MCF 10A (cell line): ENCODE measurements at regions of chr5 and their contacts with region 1.

Region 1: DNA sequence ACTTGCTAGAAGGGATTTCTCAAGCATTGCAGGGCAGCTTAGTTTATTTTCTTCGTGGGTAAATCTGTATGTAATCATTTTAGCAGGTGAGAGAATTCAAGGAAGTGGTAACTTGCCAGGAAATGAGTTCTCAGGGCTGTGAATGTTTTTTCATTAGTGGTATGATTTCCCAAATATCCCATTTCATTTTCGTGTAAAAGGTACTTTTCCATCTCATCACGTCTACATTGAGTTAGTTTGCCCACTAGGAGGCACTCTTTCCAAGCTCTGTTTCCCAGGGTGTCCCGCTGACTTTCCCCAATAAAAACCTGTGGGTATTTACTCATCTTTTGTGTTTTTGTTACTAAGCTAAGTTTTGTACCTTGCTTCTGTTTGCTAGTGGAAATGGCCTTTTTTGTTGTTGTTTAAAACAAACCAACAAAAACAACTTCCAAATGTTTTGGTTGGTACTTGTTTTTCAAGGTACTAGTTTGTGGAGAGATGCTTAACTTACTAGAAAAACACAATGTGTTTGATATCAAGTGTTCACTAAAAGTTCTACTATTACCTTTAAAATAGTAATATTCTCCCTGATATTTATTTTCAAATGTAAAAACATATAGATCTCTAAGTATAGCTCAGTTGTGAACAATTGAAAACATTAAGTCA is 373.6 kb downstream of the ADGRV1 start:
- DNase-seq: peak; percentile 77
- H3K4me3 Mint-ChIP-seq: no peak overlapping the region
- H3K27ac Mint-ChIP-seq: no peak overlapping the region
- H3K4me1 Mint-ChIP-seq: peaks cover 11% of the 10 kb centered on the region
- H3K27me3 Mint-ChIP-seq: no peaks in the 10 kb centered on the region
- CTCF ChIP-seq: peak; percentile 73

Region 2: DNA sequence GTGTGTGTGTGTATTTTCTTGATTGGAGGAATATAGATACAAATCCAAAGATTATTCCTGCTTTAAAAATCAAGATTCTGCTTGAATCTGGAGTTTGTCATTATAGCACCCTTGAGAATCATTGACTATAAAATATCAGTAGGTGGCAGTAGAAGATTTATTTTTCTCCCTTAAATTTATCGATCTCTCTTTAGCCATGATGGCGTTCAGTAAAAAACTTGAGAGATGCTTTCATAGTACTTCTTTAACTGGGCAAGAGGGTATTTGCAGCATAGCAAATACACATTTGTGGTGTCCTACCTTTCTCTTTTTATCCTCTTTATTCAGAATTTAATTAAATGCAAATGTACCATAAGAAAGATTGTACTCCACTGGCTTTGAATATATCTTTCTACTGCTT is 65.8 kb before region 1 on chr5:
- CTCF ChIA-PET with region 1: interaction called, 44 read pairs
- POLR2A ChIA-PET with region 1: interaction called, 3 read pairs
- intact Hi-C with region 1: loop called (anchors 2 kb)
- DNase-seq: peak; percentile 29
- H3K4me3 Mint-ChIP-seq: no peak overlapping the region
- H3K27ac Mint-ChIP-seq: no peak overlapping the region
- H3K4me1 Mint-ChIP-seq: no peaks in the 10 kb centered on the region
- H3K27me3 Mint-ChIP-seq: no peaks in the 10 kb centered on the region
- CTCF ChIP-seq: peak; percentile 39

Region 3: DNA sequence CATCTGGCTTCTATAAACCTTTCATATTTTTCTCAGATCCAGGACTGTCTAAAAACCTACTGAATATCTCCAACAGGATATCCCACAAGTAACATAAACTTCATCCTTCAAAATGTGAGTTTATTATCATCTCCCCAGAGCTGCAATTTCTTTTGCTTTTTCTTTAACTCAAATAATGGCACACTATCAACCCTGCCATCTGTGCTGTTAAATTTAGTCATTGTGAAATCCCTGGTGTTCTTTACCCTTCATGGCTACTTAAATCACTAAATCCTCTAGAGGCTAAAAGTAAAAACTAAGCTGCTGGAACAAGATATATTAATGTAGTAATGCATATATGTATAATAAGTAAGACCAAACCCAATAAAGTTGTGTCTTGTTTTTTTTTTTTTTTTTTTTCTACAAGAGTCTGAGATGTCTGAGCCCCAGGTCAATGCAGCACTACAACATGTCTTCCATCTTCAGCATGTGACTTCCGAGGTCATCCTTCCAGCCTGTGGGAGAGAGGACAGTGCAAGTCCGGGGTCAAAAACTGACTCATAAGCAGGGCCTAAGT is 10.7 kb before region 1 on chr5:
- CTCF ChIA-PET with region 1: interaction called, 11 read pairs
- POLR2A ChIA-PET with region 1: interaction called, 3 read pairs
- intact Hi-C with region 1: no loop called
- DNase-seq: no peak
- H3K4me3 Mint-ChIP-seq: no peak overlapping the region
- H3K27ac Mint-ChIP-seq: no peak overlapping the region
- H3K4me1 Mint-ChIP-seq: no peaks in the 10 kb centered on the region
- H3K27me3 Mint-ChIP-seq: no peaks in the 10 kb centered on the region
- CTCF ChIP-seq: no peak

Region 4: GRCh38 chr5:91074615-91075014 is 142.4 kb after region 1 on chr5:
- CTCF ChIA-PET with region 1: interaction called, 14 read pairs
- POLR2A ChIA-PET with region 1: interaction called, 3 read pairs
- intact Hi-C with region 1: no loop called
- DNase-seq: peak; percentile 41
- H3K4me3 Mint-ChIP-seq: no peak overlapping the region
- H3K27ac Mint-ChIP-seq: peak overlapping the region; percentile 28
- H3K4me1 Mint-ChIP-seq: peaks cover 38% of the 10 kb centered on the region
- H3K27me3 Mint-ChIP-seq: no peaks in the 10 kb centered on the region
- CTCF ChIP-seq: peak; percentile 15

Region 5: GRCh38 chr5:91101600-91102379 is 169.6 kb after region 1 on chr5:
- CTCF ChIA-PET with region 1: interaction called, 20 read pairs
- POLR2A ChIA-PET with region 1: interaction called, 6 read pairs
- intact Hi-C with region 1: loop called (anchors 1 kb)
- DNase-seq: peak; percentile 83
- H3K4me3 Mint-ChIP-seq: no peak overlapping the region
- H3K27ac Mint-ChIP-seq: no peak overlapping the region
- H3K4me1 Mint-ChIP-seq: peaks cover 25% of the 10 kb centered on the region
- H3K27me3 Mint-ChIP-seq: no peaks in the 10 kb centered on the region
- CTCF ChIP-seq: peak; percentile 87

Region 6: GRCh38 chr5:91225848-91226686 is 293.9 kb after region 1 on chr5:
- CTCF ChIA-PET with region 1: interaction called, 11 read pairs
- POLR2A ChIA-PET with region 1: interaction called, 6 read pairs
- intact Hi-C with region 1: loop called (anchors 2 kb)
- DNase-seq: peak; percentile 70
- H3K4me3 Mint-ChIP-seq: no peak overlapping the region
- H3K27ac Mint-ChIP-seq: no peak overlapping the region
- H3K4me1 Mint-ChIP-seq: peaks cover 22% of the 10 kb centered on the region
- H3K27me3 Mint-ChIP-seq: no peaks in the 10 kb centered on the region
- CTCF ChIP-seq: peak; percentile 65

Region 7: DNA sequence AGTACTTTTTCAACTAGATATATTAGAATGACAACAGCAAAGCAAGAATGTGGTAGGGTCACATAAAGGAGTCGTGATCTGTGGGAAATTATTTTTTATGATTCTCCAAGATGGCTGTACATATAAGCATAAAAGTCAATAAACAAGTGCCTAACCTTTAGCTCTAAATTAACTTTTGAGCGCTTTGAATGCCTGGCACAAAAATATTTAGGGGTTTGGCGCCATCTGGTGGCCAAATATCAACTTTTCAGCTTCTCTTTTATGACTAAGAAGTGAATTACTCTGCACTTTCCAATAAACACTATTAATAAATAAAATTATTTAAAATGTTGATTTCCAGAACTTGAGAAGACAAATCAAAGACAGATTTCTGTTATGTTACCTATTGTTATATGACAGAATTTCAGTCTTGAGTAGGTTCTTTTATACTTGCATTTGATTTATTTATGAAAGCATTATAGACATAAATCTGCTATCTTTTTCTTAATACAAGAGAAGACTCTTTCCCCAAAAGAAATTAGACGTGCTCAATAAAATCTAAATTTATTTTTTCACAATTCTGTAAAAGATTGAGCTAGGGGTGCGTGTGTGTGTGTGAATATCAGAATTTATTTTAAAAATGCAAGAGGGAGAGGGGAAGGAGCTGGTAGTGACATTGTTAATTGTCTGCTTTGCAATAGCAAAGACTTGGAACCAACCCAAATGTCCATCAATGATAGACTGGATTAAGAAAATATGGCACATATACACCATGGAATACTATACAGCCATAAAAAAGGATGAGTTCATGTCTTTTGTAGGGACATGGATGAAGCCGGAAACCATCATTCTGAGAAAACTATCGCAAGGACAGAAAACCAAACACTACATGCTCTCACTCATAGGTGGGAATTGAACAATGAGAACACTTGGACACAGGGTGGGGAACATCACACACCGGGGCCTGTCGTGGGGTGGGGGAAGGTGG is 487.7 kb after region 1 on chr5:
- CTCF ChIA-PET with region 1: interaction called, 6 read pairs
- POLR2A ChIA-PET with region 1: interaction called, 5 read pairs
- intact Hi-C with region 1: loop called (anchors 1 kb)
- DNase-seq: peak; percentile 73
- H3K4me3 Mint-ChIP-seq: no peak overlapping the region
- H3K27ac Mint-ChIP-seq: no peak overlapping the region
- H3K4me1 Mint-ChIP-seq: no peaks in the 10 kb centered on the region
- H3K27me3 Mint-ChIP-seq: no peaks in the 10 kb centered on the region
- CTCF ChIP-seq: peak; percentile 75